Naive thymus-derived CD4-positive, alpha-beta T cell (primary cell): ENCODE measurements at regions of chr20 and their contacts with region 1.

Region 1: DNA sequence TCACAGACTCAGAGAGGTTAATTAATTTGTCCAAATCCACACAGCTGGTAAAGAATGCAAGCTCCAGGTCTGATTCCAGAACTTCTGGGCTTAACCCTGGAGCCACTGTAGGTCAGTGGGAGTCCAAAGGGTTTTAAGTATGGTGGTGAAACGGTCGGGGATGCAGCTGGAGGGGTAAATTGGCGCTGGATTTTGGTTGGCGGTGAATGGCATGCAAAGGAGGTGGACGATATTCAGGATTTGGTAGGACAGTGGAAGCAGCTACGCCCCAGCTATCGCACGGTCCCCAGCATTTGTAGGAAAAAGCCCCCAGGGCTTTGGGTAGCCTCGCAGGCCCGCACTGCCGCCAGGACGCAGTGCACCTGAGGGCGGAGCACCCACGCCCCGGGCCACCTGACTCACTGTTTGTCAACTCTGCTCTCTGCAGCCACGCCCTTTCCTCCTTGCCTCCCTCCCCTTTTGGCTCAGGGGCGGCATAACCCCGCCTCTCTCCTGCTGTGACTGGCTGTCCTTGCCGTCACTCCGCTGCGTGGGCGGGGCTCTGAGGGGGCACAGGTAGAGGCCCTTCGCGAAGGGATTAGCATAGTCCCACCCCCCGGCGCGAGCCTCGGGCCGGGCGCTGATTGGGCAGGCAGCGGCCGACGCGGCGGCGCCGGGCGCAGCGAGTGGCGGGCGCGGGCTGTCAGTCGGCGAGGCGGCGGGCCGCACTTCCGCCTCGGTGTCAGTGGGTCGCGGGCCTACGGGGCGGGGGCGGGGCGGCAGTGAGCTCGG is at the start of gene OSBPL2:
- DNase-seq: peak; percentile 99 to 100 (median 100)
- ATAC-seq: peak; percentile 99
- H3K4me3 ChIP-seq: peak within 1 kb of the TSS; percentile 48
- H3K4me3 Mint-ChIP-seq: peak within 1 kb of the TSS; percentile 82 to 90 (median 87)
- H3K27ac ChIP-seq: peak within 1 kb of the TSS; percentile 79
- H3K27ac Mint-ChIP-seq: peak within 1 kb of the TSS; percentile 85 to 97 (median 94)
- H3K4me1 ChIP-seq: peaks cover 10 to 22% of the 10 kb centered on the region in 2 donors
- H3K4me1 Mint-ChIP-seq: peaks cover 27 to 47% (median 39%) of the 10 kb centered on the region in 7 donors
- H3K27me3 ChIP-seq: no peaks in the 10 kb centered on the region
- H3K27me3 Mint-ChIP-seq: peaks cover 0 to 5% (median 4%) of the 10 kb centered on the region in 5 donors
- total RNA-seq, gene OSBPL2: 37.6 to 80.8 (median 69.3) TPM

Region 2: DNA sequence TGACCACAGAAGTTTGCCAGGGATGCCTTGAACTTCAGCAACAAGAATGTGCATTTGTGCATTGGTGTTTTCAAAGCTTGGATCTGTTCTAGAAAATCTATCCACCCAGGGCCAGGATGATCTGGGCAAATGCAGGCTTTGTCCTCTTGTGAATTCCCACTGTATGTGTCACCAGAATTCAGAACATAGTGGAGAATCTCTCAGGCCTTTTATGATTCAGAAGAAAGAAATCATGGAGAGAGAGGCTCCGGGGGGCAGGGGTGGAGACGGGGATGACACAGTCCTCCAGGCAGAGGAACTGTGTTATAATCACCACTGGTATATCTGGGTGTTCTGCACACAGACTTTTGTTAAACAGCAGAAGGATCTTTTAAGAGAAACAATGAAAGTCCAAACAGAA is 681.9 kb before region 1 on chr20:
- CTCF ChIA-PET with region 1: no interaction called
- POLR2A ChIA-PET with region 1: no interaction called
- intact Hi-C with region 1: no loop called
- DNase-seq: no peak
- ATAC-seq: no peak
- H3K4me3 ChIP-seq: no peak overlapping the region
- H3K4me3 Mint-ChIP-seq: no peak overlapping the region
- H3K27ac ChIP-seq: no peak overlapping the region
- H3K27ac Mint-ChIP-seq: no peak overlapping the region
- H3K4me1 ChIP-seq: no peaks in the 10 kb centered on the region
- H3K4me1 Mint-ChIP-seq: no peaks in the 10 kb centered on the region
- H3K27me3 ChIP-seq: no peaks in the 10 kb centered on the region
- H3K27me3 Mint-ChIP-seq: peaks cover 0 to 18% (median 4%) of the 10 kb centered on the region in 5 donors

Region 3: DNA sequence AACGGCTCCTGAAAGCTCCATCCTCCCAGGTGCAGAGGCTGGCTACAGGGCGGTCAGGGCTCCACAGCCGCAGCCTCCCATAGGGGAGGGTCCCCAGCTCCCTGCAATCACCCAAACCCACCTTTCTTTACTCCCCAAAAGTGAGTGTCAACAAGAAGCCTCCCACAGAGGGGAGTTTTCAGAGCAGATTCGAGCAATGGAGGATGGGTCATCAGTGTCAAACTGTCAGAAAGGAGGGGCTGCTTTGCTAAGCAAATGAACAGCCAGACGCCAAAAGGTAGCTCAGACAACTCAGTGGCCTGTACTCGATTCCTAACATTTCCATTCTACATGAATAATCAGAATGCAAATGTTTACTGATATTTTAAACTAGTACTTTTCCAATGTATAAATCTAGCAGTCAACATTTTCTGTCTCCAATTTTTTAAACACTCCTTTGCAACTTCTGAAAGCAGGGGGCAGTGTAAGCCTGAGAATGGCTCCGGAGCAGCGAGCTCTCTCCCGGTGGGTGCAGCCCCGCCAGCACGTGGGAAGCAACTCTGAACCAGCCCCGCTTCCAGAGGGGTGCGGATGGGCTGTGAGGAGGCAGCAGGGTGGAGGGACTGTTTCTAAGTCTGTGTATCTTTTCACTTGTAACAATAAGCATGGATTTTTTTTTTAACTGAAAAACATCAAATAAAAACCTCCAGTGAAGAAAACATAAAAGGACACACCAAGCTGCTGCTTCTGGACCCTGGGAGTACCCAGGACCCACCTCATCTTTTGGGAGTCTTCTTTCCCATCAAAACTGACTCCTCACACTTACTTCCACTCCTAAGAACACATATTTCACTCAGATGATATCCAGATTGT is 227.2 kb before region 1 on chr20:
- CTCF ChIA-PET with region 1: no interaction called
- POLR2A ChIA-PET with region 1: no interaction called
- intact Hi-C with region 1: loop called in 1 of 2 experiments (anchors 1 kb)
- DNase-seq: peak; percentile 36 to 70 (median 66)
- ATAC-seq: peak; percentile 81
- H3K4me3 ChIP-seq: no peak overlapping the region
- H3K4me3 Mint-ChIP-seq: peak overlapping the region in 1 of 10 donors; percentile 6
- H3K27ac ChIP-seq: no peak overlapping the region
- H3K27ac Mint-ChIP-seq: peak overlapping the region in 6 of 9 donors; percentile 6 to 65 (median 43)
- H3K4me1 ChIP-seq: peaks cover 0 to 4% of the 10 kb centered on the region in 2 donors
- H3K4me1 Mint-ChIP-seq: peaks cover 6 to 24% (median 10%) of the 10 kb centered on the region in 7 donors
- H3K27me3 ChIP-seq: no peaks in the 10 kb centered on the region
- H3K27me3 Mint-ChIP-seq: no peaks in the 10 kb centered on the region

Region 4: DNA sequence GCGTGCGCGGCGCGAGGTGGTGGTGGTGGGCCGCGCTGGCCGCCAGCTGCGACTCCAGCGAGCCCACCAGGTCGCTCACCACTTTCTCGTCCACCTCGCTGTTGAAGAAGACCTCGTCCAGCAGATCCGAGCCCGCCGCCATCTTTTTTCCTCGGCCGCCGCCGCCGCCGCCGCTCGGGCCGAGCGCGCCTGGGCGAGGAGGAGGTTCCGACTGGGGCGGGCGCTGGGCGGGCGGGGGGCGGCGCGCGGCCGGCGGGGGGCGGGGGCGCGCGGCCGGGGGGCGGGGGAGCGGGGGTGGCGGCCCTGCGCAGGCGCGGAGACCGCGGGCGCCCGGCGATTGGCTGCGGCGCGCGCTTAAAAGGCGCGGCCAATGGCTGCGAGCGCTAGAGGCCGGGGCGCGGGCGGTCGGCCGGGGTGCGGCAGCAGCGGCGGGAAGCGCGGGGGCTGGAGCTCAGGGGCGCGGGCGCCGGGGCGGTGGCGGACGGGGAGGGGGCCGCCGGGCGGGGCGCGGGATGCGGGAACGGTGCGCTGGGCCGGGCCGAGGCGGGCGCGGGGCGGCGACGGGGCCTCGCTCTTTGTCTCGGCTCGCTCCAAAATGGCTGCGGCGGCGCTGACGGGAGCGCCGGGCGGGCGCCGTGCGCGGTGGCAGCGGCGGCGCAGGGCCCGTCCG is 172.2 kb before region 1 on chr20 and contains the start of gene TAF4:
- CTCF ChIA-PET with region 1: no interaction called
- POLR2A ChIA-PET with region 1: no interaction called
- intact Hi-C with region 1: loop called in 1 of 2 experiments (anchors 1 kb)
- DNase-seq: peak; percentile 70 to 89 (median 81)
- ATAC-seq: peak; percentile 85
- H3K4me3 ChIP-seq: peak within 1 kb of the TSS; percentile 64
- H3K4me3 Mint-ChIP-seq: peak within 1 kb of the TSS; percentile 82 to 92 (median 89)
- H3K27ac ChIP-seq: peak within 1 kb of the TSS; percentile 78
- H3K27ac Mint-ChIP-seq: peak within 1 kb of the TSS; percentile 89 to 97 (median 93)
- H3K4me1 ChIP-seq: peaks cover 23 to 29% of the 10 kb centered on the region in 2 donors
- H3K4me1 Mint-ChIP-seq: peaks cover 25 to 56% (median 50%) of the 10 kb centered on the region in 7 donors
- H3K27me3 ChIP-seq: no peaks in the 10 kb centered on the region
- H3K27me3 Mint-ChIP-seq: peaks cover 0 to 2% (median 0%) of the 10 kb centered on the region in 5 donors
- total RNA-seq, gene TAF4: 19.8 to 43.7 (median 23.7) TPM

Region 5: GRCh38 chr20:62143118-62143973 is 94.6 kb before region 1 on chr20 and contains the starts of genes PSMA7 and SS18L1:
- CTCF ChIA-PET with region 1: no interaction called
- POLR2A ChIA-PET with region 1: interaction called, 5 read pairs
- intact Hi-C with region 1: loop called (anchors 1 kb)
- DNase-seq: peak; percentile 79 to 90 (median 87)
- ATAC-seq: peak; percentile 91
- H3K4me3 ChIP-seq: peak within 1 kb of the TSS; percentile 65
- H3K4me3 Mint-ChIP-seq: peak within 1 kb of the TSS; percentile 89 to 98 (median 92)
- H3K27ac ChIP-seq: peak within 1 kb of the TSS; percentile 75
- H3K27ac Mint-ChIP-seq: peak within 1 kb of the TSS; percentile 80 to 97 (median 93)
- H3K4me1 ChIP-seq: peaks cover 28 to 36% of the 10 kb centered on the region in 2 donors
- H3K4me1 Mint-ChIP-seq: peaks cover 36 to 64% (median 55%) of the 10 kb centered on the region in 7 donors
- H3K27me3 ChIP-seq: no peaks in the 10 kb centered on the region
- H3K27me3 Mint-ChIP-seq: no peaks in the 10 kb centered on the region
- total RNA-seq, gene PSMA7: 125 to 301 (median 165) TPM
- total RNA-seq, gene SS18L1: 17.8 to 26.7 (median 22.6) TPM

Region 6: GRCh38 chr20:62219992-62220665 is 17.9 kb before region 1 on chr20 and contains the start of gene HRH3:
- CTCF ChIA-PET with region 1: no interaction called
- POLR2A ChIA-PET with region 1: no interaction called
- intact Hi-C with region 1: loop called (anchors 1 to 2 kb)
- DNase-seq: peak in 8 of 9 donors; percentile 25 to 69 (median 47)
- ATAC-seq: peak; percentile 87
- H3K4me3 ChIP-seq: no peak within 1 kb of the TSS
- H3K4me3 Mint-ChIP-seq: peak within 1 kb of the TSS in 9 of 10 donors; percentile 20 to 83 (median 47)
- H3K27ac ChIP-seq: no peak within 1 kb of the TSS
- H3K27ac Mint-ChIP-seq: no peak within 1 kb of the TSS
- H3K4me1 ChIP-seq: no peaks in the 10 kb centered on the region
- H3K4me1 Mint-ChIP-seq: peaks cover 0 to 5% (median 3%) of the 10 kb centered on the region in 7 donors
- H3K27me3 ChIP-seq: peaks cover 0 to 24% of the 10 kb centered on the region in 2 donors
- H3K27me3 Mint-ChIP-seq: peaks cover 17 to 52% (median 30%) of the 10 kb centered on the region in 5 donors
- total RNA-seq, gene HRH3: not detected

Region 7: DNA sequence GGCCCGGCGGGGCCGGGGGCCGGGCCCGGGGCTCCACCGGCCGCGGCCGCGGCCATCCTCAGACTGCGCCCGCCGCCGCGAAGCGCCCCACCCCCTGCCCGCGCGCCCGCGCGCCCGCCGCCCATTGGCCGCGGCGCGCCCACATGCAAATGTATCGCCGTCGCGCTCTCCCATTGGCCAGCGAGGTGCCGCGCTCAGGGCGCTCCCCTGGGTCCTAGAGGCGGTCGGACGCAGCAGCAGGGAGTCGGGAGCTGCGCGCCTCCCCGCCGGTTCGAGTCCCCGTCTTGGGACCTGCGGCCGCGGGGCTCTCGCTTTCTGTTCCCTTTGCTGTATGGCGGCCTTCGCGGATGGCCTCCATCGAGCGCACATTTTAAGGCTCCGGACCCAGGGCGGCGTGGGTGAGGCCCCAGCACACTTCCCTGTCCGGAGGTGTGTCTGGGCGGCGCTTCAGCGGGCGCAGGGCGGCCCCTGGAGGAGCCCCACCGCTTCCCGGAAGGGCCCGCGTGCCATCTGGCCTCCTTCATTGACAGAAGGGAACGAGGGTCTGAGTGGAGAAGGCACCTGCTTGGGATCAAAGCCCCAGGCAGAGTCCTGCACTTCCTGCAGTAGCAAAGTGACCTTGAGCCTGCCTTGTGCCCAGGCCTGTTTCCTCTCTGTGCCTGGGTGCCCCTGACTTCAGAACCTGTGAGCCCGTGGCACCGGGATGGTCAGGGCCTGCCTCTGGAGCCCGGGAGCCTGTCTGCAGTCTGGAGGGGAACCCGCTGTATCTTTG is 169.4 kb after region 1 on chr20 and contains the start of gene CABLES2:
- CTCF ChIA-PET with region 1: no interaction called
- POLR2A ChIA-PET with region 1: no interaction called
- intact Hi-C with region 1: loop called in 1 of 2 experiments (anchors 1 kb)
- DNase-seq: peak; percentile 86 to 94 (median 91)
- ATAC-seq: peak; percentile 98
- H3K4me3 ChIP-seq: peak within 1 kb of the TSS; percentile 74
- H3K4me3 Mint-ChIP-seq: peak within 1 kb of the TSS; percentile 68 to 90 (median 82)
- H3K27ac ChIP-seq: peak within 1 kb of the TSS; percentile 76
- H3K27ac Mint-ChIP-seq: peak within 1 kb of the TSS in 8 of 9 donors; percentile 52 to 88 (median 68)
- H3K4me1 ChIP-seq: peaks cover 17 to 23% of the 10 kb centered on the region in 2 donors
- H3K4me1 Mint-ChIP-seq: peaks cover 19 to 31% (median 26%) of the 10 kb centered on the region in 7 donors
- H3K27me3 ChIP-seq: no peaks in the 10 kb centered on the region
- H3K27me3 Mint-ChIP-seq: peaks cover 0 to 3% (median 0%) of the 10 kb centered on the region in 5 donors
- total RNA-seq, gene CABLES2: 4.3 to 16.7 (median 6.3) TPM

Region 8: DNA sequence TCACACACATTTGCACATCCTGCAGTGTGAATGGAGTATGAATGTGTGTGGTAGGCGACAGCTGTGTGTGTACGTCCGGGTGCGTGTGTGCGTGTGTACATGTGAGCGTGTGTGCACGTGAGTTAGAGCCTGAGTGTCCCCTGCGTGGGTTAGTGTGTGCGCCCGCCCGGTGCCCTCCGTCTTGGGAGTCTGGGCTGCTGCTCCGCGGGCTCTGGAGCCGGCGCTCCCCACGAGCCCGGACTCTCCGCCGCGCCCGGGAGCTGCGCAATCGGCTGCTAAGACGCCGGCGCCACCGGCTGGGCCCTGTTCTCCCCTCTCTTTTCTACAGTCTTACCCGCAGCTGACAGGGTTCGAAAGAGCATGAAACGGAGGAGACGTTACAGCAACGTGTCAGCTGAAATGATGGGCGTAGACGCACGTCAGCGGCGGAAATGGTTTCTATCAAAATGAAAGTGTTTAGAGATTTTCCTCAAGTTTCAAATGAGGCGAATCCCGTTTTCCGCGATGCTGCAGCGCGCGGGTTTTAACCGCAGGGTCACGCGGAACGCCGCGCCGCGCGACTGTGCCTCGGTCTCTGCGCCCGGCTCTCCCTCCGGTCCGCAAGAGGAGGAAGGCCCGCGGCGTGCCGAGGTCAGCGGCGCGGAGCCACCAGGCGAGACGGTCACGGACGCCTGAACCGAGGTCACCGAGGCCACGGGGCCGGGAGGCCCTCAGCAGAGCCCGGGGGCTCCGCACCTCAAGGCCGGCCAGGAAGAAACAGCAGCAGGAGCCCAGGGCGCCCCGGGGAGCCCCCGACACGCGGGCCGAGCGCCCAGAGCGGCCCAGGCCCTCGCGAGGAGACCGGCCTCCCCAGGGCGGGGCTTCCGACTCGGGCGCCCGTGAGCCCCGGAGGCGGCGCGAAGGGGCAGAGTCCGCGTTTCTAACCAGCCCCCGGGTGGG is 864.1 kb after region 1 on chr20:
- CTCF ChIA-PET with region 1: no interaction called
- POLR2A ChIA-PET with region 1: no interaction called
- intact Hi-C with region 1: loop called in 1 of 2 experiments (anchors 5 kb)
- DNase-seq: peak; percentile 53 to 84 (median 80)
- ATAC-seq: peak; percentile 76
- H3K4me3 ChIP-seq: peak overlapping the region; percentile 84
- H3K4me3 Mint-ChIP-seq: peak overlapping the region; percentile 86 to 95 (median 92)
- H3K27ac ChIP-seq: peak overlapping the region; percentile 88
- H3K27ac Mint-ChIP-seq: peak overlapping the region; percentile 90 to 99 (median 96)
- H3K4me1 ChIP-seq: no peaks in the 10 kb centered on the region
- H3K4me1 Mint-ChIP-seq: peaks cover 0 to 8% (median 5%) of the 10 kb centered on the region in 7 donors
- H3K27me3 ChIP-seq: no peaks in the 10 kb centered on the region
- H3K27me3 Mint-ChIP-seq: no peaks in the 10 kb centered on the region

Region 9: DNA sequence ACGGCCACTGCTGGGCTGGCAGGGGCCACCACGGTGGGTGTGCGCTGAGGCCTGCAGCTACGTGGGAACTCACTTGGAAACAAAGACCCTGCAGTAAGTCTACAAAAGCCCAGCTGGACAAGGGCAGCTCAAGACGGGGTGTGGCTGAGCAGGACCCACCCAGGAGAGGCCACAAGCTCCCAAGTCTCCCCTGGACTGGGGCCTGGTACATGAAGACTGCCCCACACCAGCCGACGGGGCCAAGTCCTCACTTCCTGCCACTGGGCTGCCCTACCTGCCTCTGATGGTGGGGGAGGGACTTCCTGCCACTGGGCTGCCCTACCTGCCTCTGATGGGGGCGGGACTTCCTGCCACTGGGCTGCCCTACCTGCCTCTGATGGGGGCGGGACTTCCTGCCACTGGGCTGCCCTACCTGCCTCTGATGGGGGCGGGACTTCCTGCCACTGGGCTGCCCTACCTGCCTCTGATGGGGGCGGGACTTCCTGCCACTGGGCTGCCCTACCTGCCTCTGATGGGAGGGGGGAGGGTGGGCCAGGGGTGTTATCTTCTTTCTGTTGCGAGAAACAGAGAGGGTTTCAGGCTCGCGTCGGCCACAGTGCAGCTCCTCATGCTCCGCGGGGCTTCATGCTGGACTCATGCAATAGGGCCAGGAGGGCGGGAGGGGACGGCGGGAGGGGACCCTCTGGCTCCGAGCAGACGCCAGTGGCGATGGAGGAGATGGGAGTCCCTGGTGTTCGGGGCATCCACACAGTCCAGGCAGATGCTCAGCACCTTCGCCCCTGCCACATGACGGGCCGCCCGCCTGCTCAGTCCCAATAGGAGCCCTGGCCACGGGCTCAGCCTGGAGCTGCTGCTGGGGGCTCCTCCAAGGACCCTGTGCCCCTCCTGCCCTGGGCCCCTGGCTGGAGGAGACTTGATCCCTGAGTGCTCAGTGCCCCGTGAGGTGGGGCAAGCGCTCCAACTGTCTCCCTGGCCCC is 1171.8 kb after region 1 on chr20:
- CTCF ChIA-PET with region 1: no interaction called
- POLR2A ChIA-PET with region 1: no interaction called
- intact Hi-C with region 1: no loop called
- DNase-seq: peak in 3 of 9 donors; percentile 21 to 39 (median 23)
- ATAC-seq: no peak
- H3K4me3 ChIP-seq: no peak overlapping the region
- H3K4me3 Mint-ChIP-seq: peak overlapping the region in 2 of 10 donors; percentile 9 to 48
- H3K27ac ChIP-seq: no peak overlapping the region
- H3K27ac Mint-ChIP-seq: peak overlapping the region in 1 of 9 donors; percentile 75
- H3K4me1 ChIP-seq: peaks cover 0 to 6% of the 10 kb centered on the region in 2 donors
- H3K4me1 Mint-ChIP-seq: peaks cover 3 to 15% (median 9%) of the 10 kb centered on the region in 7 donors
- H3K27me3 ChIP-seq: no peaks in the 10 kb centered on the region
- H3K27me3 Mint-ChIP-seq: peaks cover 0 to 4% (median 0%) of the 10 kb centered on the region in 5 donors